ENCODE measurements at regions of chr3 and their contacts with region 1.

Region 1: GRCh38 chr3:39990532-39990931 is 181.1 kb downstream of the MYRIP start:
- DNase-seq: peak; percentile 42
- ATAC-seq: no peak
- H3K4me3 Mint-ChIP-seq: no peak overlapping the region
- H3K27ac Mint-ChIP-seq: no peak overlapping the region
- H3K4me1 Mint-ChIP-seq: no peaks in the 10 kb centered on the region
- H3K27me3 Mint-ChIP-seq: peaks cover 23% of the 10 kb centered on the region

Region 2: DNA sequence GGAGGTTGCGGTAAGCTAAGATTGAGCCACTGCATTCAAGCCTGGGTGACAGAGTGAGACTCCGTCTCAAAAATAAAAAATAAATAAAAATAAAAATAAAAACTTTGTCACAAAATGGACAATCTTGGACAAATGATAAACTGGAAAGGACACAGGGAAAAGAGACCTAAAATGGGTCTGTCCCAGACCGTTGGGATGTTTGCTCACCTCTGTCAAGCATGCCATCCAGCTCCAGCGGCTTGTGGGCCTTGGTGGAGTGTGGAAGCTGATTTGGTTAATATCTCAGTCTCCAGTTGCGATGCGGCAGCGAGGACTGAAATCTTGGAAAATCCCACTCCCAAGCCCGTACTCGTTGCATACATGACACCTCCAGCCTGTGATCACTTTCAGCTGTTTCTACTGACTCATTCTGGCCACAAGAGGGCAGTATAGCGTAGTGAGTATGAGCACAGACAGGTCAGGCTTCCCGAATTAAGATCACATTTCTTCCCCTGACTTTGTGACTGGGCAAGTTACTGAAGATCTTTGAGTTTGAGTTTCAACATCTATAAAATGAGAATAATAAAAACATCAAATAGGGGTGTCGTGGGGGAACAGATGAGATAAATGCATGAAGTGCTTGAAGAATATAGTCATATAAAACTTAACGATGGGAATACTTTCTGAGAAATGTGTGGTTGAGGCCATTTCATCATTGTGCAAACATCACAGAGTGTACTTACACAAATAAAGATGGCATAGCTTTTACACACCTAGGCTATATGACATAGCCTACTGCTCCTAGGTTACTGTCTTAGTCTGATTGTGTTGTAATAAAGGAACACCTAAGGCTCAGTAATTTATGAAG is 542.7 kb before region 1 on chr3:
- CTCF ChIA-PET with region 1: interaction called, 3 read pairs
- POLR2A ChIA-PET with region 1: no interaction called
- intact Hi-C with region 1: loop called (anchors 1 to 2 kb)
- DNase-seq: peak; percentile 72
- ATAC-seq: peak; percentile 86
- H3K4me3 Mint-ChIP-seq: no peak overlapping the region
- H3K27ac Mint-ChIP-seq: no peak overlapping the region
- H3K4me1 Mint-ChIP-seq: no peaks in the 10 kb centered on the region
- H3K27me3 Mint-ChIP-seq: peaks cover 3% of the 10 kb centered on the region

Region 3: DNA sequence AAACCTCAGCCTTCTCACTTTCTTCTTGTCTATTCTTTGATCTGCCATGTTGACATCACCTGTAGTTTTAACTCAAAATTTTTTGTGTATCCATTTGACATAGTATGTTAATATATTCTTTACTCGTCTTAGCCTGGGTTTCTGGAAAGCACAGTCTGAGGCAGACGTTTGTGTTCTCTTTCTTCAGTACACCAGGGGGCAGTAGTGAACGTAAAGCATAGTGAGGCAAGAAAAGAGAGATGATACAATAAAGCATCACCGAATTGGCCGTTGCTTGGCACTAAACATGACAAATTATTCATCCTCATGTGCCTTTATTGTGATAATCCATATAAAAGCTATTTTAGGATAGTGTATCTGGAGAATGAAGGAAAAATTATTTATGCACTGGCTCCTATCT is 322.1 kb before region 1 on chr3:
- CTCF ChIA-PET with region 1: no interaction called
- POLR2A ChIA-PET with region 1: no interaction called
- intact Hi-C with region 1: loop called (anchors 2 kb)
- DNase-seq: peak; percentile 13
- ATAC-seq: no peak
- H3K4me3 Mint-ChIP-seq: no peak overlapping the region
- H3K27ac Mint-ChIP-seq: no peak overlapping the region
- H3K4me1 Mint-ChIP-seq: no peaks in the 10 kb centered on the region
- H3K27me3 Mint-ChIP-seq: peaks cover 7% of the 10 kb centered on the region

Region 4: DNA sequence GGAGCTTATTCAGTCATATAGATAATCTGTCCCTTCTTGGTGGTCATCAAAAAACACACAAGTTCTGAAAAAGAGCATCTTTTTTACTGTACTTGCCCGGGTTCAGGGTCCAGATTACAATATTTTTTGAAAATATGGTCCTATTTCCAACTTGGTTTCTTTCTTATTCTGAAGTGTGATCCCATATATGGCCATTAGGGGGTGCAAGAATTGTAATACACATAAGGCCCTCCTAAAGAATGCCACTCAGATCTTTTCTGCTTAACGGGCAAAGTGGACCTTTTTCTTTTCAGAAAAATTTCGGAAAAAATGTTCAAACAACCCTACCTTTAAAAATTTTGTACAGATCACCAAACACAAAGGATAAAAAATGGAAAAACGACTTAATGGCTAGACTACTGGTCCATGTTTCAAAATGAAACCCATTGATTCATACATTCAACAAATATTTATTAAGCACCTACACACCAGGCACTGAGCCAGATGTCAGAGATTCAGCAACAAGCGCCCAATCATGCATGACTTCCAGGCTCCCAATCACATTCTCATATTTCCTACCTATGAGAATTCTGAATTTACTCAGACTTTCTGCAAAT is 283.1 kb before region 1 on chr3:
- CTCF ChIA-PET with region 1: no interaction called
- POLR2A ChIA-PET with region 1: no interaction called
- intact Hi-C with region 1: loop called in 1 of 2 experiments (anchors 1 kb)
- DNase-seq: no peak
- ATAC-seq: no peak
- H3K4me3 Mint-ChIP-seq: no peak overlapping the region
- H3K27ac Mint-ChIP-seq: no peak overlapping the region
- H3K4me1 Mint-ChIP-seq: no peaks in the 10 kb centered on the region
- H3K27me3 Mint-ChIP-seq: peaks cover 3% of the 10 kb centered on the region

Region 5: GRCh38 chr3:39724233-39724846 is 266.2 kb before region 1 on chr3:
- CTCF ChIA-PET with region 1: no interaction called
- POLR2A ChIA-PET with region 1: no interaction called
- intact Hi-C with region 1: loop called in 1 of 2 experiments (anchors 5 kb)
- DNase-seq: no peak
- ATAC-seq: no peak
- H3K4me3 Mint-ChIP-seq: no peak overlapping the region
- H3K27ac Mint-ChIP-seq: no peak overlapping the region
- H3K4me1 Mint-ChIP-seq: no peaks in the 10 kb centered on the region
- H3K27me3 Mint-ChIP-seq: no peaks in the 10 kb centered on the region